Esophagus squamous epithelium (tissue), 5 donors: ENCODE measurements at regions of chr1 and their contacts with region 1.

Region 1: GRCh38 chr1:82597649-82598048 is 796.9 kb downstream of the ADGRL2 start:
- DNase-seq: no peak
- H3K4me3 ChIP-seq: no peak overlapping the region
- H3K27ac ChIP-seq: no peak overlapping the region
- H3K4me1 ChIP-seq: no peaks in the 10 kb centered on the region
- H3K27me3 ChIP-seq: no peaks in the 10 kb centered on the region
- CTCF ChIP-seq: no peak
- POLR2A ChIP-seq: no peak

Region 2: DNA sequence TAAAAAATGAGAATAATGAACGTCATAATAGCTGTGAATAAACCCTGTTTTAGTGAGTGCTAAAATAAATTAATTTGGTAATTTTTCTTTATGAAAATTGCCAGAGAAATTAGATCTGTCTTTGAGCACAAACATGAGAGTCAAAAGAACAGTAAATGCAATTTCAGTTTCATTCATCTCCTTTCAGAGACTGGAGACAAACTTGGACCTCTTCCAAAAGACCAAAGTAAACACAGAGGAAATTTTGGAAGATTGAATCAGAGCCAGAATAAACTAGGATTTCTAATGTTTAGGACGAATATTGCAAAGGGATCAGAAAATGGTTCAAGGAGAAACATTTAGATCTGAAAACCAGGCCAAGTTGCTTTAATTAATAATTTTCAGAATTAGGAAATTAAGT is 486.8 kb before region 1 on chr1:
- intact Hi-C with region 1: no loop called
- DNase-seq: no peak
- H3K4me3 ChIP-seq: no peak overlapping the region
- H3K27ac ChIP-seq: no peak overlapping the region
- H3K4me1 ChIP-seq: peaks cover 0 to 4% (median 0%) of the 10 kb centered on the region in 3 donors
- H3K27me3 ChIP-seq: no peaks in the 10 kb centered on the region
- CTCF ChIP-seq: no peak
- POLR2A ChIP-seq: no peak

Region 3: GRCh38 chr1:82646336-82646735 is 48.7 kb after region 1 on chr1:
- intact Hi-C with region 1: loop called (anchors 5 kb)
- DNase-seq: no peak
- H3K4me3 ChIP-seq: no peak overlapping the region
- H3K27ac ChIP-seq: no peak overlapping the region
- H3K4me1 ChIP-seq: peaks cover 0 to 4% (median 0%) of the 10 kb centered on the region in 3 donors
- H3K27me3 ChIP-seq: no peaks in the 10 kb centered on the region
- CTCF ChIP-seq: no peak
- POLR2A ChIP-seq: no peak